ENCODE measurements at regions of chr2 and their contacts with region 1.

Region 1: GRCh38 chr2:128187032-128187654 is 96.1 kb downstream of the UGGT1 start:
- DNase-seq: no peak
- H3K4me3 ChIP-seq: no peak overlapping the region
- H3K27ac ChIP-seq: no peak overlapping the region
- H3K4me1 ChIP-seq: no peaks in the 10 kb centered on the region
- H3K27me3 ChIP-seq: no peaks in the 10 kb centered on the region
- CTCF ChIP-seq: no peak

Region 2: GRCh38 chr2:128305159-128306087 is 118.3 kb after region 1 on chr2:
- intact Hi-C with region 1: loop called (anchors 10 kb)
- DNase-seq: no peak
- H3K4me3 ChIP-seq: no peak overlapping the region
- H3K27ac ChIP-seq: peak overlapping the region; percentile 51 to 63
- H3K4me1 ChIP-seq: peaks cover 10 to 33% of the 10 kb centered on the region in 2 donors
- H3K27me3 ChIP-seq: no peaks in the 10 kb centered on the region
- CTCF ChIP-seq: no peak

Measured in ascending aorta (tissue), 2 donors.